Tibial artery (tissue), 4 donors: ENCODE measurements at regions of chr7 and their contacts with region 1.

Region 1: DNA sequence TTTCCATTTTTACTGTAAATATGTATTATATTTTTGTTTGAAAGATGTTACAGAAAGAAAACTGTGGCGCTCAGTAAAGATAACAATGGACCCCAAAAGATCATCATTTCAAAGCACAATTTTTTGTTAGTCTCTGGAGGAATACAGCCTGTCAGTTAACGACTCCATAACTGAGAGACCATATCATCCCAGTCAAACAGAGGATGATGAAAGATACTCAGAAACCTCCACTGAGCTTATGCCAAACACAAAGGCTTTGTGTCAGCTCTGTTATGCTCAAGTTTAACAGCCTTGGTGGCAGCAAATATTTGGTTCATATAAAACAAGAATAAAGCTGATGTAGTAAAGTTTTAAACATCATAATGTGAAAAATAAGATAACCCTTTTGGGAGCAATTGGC is 345.1 kb downstream of the NXPH1 start:
- DNase-seq: no peak
- H3K4me3 ChIP-seq: no peak overlapping the region
- H3K27ac ChIP-seq: no peak overlapping the region
- H3K4me1 ChIP-seq: no peaks in the 10 kb centered on the region
- H3K27me3 ChIP-seq: no peaks in the 10 kb centered on the region
- CTCF ChIP-seq: no peak

Region 2: DNA sequence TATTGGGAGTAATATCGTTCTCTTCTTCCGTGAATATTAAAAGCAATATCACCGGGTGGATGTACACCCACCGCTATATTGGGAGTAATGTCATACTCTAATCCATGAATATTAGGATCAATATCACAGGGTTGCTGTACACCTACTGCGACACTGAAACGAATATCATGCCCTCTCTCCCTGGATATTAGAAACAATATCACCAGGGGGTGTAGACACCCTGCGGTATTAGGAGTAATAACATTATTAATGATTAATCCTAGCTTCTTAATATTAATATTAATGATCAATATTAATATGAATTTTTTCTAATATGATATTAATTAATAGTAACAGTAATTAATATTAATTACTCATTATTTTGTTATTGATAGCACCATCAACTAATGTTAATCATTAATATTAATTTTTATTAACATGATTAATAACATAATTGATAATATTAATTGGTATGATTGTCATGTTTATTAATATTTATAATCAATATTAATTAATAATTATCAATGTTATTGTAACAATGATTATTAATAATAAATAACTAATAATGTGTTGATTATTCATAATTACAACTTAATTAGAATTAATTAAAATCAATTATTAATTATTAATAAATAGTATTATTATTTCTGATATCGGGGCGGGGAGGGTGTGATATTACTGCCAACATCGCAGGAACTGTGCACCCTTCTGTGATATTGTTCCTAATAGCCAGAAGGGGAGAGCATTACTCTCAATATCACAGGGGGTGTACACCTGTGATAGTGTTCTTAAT is 1717.4 kb before region 1 on chr7:
- intact Hi-C with region 1: loop called (anchors 5 kb)
- DNase-seq: no peak
- H3K4me3 ChIP-seq: no peak overlapping the region
- H3K27ac ChIP-seq: no peak overlapping the region
- H3K4me1 ChIP-seq: no peaks in the 10 kb centered on the region
- H3K27me3 ChIP-seq: no peaks in the 10 kb centered on the region
- CTCF ChIP-seq: no peak

Region 3: GRCh38 chr7:9091282-9091681 is 312.8 kb after region 1 on chr7:
- intact Hi-C with region 1: no loop called
- DNase-seq: no peak
- H3K4me3 ChIP-seq: no peak overlapping the region
- H3K27ac ChIP-seq: no peak overlapping the region
- H3K4me1 ChIP-seq: no peaks in the 10 kb centered on the region
- H3K27me3 ChIP-seq: no peaks in the 10 kb centered on the region
- CTCF ChIP-seq: no peak